PC-3 (cell line): ENCODE measurements at regions of chr1 and their contacts with region 1.

Region 1: GRCh38 chr1:202281316-202282024 is 60.3 kb downstream of the UBE2T start:
- DNase-seq: peak; percentile 57
- ATAC-seq: no peak
- H3K4me3 ChIP-seq: no peak overlapping the region
- H3K27ac ChIP-seq: no peak overlapping the region
- H3K4me1 ChIP-seq: peaks cover 68% of the 10 kb centered on the region
- H3K27me3 ChIP-seq: no peaks in the 10 kb centered on the region
- CTCF ChIP-seq: no peak

Region 2: GRCh38 chr1:202291961-202292712 is 10.7 kb after region 1 on chr1:
- CTCF ChIA-PET with region 1: no interaction called
- POLR2A ChIA-PET with region 1: no interaction called
- intact Hi-C with region 1: loop called (anchors 1 kb)
- DNase-seq: peak; percentile 87
- ATAC-seq: peak; percentile 82
- H3K4me3 ChIP-seq: no peak overlapping the region
- H3K27ac ChIP-seq: peak overlapping the region; percentile 36
- H3K4me1 ChIP-seq: peaks cover 35% of the 10 kb centered on the region
- H3K27me3 ChIP-seq: no peaks in the 10 kb centered on the region
- CTCF ChIP-seq: no peak